Colonic mucosa (tissue), 4 donors: ENCODE measurements at regions of chr18 and their contacts with region 1.

Region 1: DNA sequence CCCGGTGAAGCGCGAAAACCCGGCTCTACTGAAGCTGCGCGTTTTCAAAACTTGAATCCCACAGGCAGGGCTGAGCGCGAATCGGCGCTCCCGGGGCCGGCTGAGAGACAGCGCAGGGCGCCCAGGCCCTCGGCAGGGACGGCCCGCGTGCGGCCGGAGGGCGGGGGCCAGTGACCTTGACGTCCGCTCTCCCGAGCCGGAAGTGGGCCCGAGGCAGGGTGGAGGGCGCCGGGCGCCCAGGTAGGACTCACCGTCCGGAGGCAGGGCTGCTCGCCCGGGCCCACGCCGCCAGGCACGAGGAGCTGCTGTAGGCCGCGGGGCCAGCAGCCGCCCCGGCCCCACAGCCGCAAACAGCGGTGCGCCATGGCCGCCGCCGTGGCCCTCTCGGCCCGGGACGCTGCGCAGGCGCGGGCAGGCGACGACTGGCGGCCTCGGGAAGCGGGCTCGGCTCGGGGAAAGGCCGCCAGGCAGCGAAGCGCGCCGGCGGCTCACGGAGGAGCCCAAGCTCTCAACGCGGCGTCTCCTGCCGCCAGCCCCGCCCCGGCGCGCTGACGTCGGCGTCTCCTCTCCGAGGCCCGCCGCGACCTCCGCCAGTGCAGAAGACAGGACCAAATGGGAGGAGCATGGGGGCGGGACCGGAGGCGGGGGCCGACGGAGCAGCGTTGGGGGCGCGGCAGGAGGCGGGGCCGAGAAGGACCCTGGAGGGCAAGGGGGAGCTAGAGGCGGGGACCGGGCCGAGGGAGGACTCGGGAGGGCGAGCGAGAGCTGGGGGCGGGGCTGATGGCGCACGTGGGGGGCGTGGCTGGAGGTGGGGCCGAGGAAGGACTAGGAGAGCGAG is at the start of gene AFG3L2:
- DNase-seq: peak; percentile 100
- H3K4me3 ChIP-seq: peak within 1 kb of the TSS; percentile 70
- H3K27ac ChIP-seq: peak within 1 kb of the TSS; percentile 100
- H3K4me1 ChIP-seq: peaks cover 20% of the 10 kb centered on the region
- H3K27me3 ChIP-seq: no peaks in the 10 kb centered on the region
- CTCF ChIP-seq: no peak
- total RNA-seq, gene AFG3L2: 94.3 to 112 TPM

Region 2: GRCh38 chr18:12066910-12067511 is 309.9 kb before region 1 on chr18:
- intact Hi-C with region 1: no loop called
- DNase-seq: no peak
- H3K4me3 ChIP-seq: no peak overlapping the region
- H3K27ac ChIP-seq: no peak overlapping the region
- H3K4me1 ChIP-seq: no peaks in the 10 kb centered on the region
- H3K27me3 ChIP-seq: no peaks in the 10 kb centered on the region
- CTCF ChIP-seq: no peak

Region 3: DNA sequence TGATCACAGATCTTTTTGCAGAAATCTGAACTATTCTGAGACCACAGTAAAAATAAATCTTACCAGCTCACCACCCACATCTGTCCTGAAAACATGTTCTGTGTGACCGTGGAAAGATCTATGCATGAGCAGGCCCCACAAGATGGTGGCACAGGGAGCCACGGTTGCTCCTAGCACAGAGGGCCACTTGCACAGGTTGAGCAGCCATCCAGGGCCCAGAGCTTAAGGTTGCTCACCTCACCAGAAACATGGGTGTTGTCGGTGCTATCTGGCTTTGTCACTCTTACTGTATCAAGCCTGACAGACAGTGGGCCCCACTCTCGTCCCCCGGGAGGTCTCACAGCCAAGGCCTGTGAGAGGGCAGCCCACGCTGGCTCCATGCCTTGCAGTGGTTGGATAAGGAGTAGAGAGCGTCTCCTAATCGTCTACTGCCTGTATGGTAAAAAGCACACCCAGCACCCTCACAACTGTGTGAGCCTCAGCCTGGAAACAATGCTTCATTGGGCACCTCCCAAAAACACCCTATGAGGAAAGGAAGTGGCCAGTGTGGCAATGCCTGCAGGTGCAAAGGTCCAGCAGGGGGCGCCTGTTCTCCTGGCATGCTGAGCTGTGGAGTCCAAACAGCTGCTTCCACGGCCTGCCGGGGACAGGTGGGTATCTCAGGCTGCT is 49.3 kb before region 1 on chr18:
- intact Hi-C with region 1: loop called (anchors 10 kb)
- DNase-seq: peak; percentile 80
- H3K4me3 ChIP-seq: no peak overlapping the region
- H3K27ac ChIP-seq: no peak overlapping the region
- H3K4me1 ChIP-seq: no peaks in the 10 kb centered on the region
- H3K27me3 ChIP-seq: no peaks in the 10 kb centered on the region
- CTCF ChIP-seq: peak; percentile 84